ENCODE measurements at regions of chr14 and their contacts with region 1.

Region 1: DNA sequence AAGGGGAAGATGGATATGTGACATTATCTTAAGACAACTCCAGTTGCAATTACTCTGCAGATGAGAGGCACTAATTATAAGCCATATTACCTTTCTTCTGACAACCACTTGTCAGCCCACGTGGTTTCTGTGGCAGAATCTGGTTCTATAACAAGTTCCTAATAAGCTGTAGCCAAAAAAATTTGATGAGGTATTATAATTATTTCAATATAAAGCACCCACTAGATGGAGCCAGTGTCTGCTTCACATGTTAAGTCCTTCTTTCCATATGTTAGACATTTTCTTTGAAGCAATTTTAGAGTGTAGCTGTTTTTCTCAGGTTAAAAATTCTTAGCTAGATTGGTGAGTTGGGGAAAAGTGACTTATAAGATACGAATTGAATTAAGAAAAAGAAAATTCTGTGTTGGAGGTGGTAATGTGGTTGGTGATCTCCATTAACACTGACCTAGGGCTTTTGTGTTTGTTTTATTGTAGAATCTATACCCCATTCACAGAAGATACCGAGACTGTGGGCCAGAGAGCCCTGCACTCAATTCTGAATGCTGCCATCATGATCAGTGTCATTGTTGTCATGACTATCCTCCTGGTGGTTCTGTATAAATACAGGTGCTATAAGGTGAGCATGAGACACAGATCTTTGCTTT is 36.9 kb downstream of the PSEN1 start:
- DNase-seq: peak; percentile 31
- ATAC-seq: peak; percentile 52; the same call in 1 of the 2 replicates
- H3K4me3 ChIP-seq: no peak overlapping the region
- H3K27ac ChIP-seq: no peak overlapping the region
- H3K4me1 ChIP-seq: no peaks in the 10 kb centered on the region
- H3K27me3 ChIP-seq: no peaks in the 10 kb centered on the region
- CTCF ChIP-seq: peak; percentile 36 to 63 (median 57); a peak in 5 of 6 replicates
- POLR2A ChIP-seq: no peak
- RAD21 ChIP-seq: peak; percentile 64

Region 2: DNA sequence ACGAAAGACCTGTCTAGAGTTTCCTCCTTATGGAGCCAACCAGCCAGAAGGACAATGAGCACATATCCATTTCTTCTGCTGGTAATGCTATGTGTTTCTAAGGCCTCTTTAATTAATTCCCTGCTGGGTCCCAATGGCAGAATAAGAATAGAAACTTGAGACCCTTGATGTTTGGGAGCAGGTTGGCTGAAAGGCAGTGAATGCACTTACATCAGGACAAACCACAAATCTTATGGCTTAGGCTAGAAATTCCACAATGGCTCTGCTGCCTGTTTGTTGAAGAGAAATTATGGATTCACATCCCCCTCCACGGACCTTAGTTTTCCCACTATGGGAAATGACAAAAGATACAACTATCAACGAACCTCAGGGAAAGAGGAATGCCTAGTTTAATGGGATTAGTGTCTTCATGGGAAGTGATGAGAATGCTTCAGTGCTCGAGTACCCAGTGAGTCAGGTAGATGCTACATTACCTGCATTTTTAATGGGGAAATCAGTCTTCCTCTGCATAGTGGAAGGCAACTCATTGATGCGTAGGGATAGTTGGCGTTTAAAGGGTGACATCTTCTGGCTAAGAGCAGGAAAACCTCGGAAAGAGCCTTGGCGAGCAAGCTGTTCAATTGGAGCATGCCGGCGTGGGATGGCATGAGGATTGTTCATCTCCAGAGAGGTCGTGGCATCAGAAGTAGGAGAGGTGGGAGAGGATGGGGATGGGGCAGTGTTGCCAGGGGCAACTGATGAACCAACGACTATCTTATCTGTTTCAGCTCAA is 110.6 kb after region 1 on chr14:
- CTCF ChIA-PET with region 1: interaction called, 6 read pairs
- POLR2A ChIA-PET with region 1: no interaction called
- RAD21 ChIA-PET with region 1: no interaction called
- intact Hi-C with region 1: loop called (anchors 2 kb)
- DNase-seq: no peak
- ATAC-seq: peak; percentile 70
- H3K4me3 ChIP-seq: no peak overlapping the region
- H3K27ac ChIP-seq: no peak overlapping the region
- H3K4me1 ChIP-seq: no peaks in the 10 kb centered on the region
- H3K27me3 ChIP-seq: no peaks in the 10 kb centered on the region
- CTCF ChIP-seq: peak in 2 of 3 experiments; percentile 8 to 22; a peak in 1 of 6 replicates
- POLR2A ChIP-seq: no peak
- RAD21 ChIP-seq: peak; percentile 43; the same call in 1 of the 2 replicates

Region 3: GRCh38 chr14:73472185-73473114 is 299.2 kb after region 1 on chr14:
- CTCF ChIA-PET with region 1: interaction called, 37 read pairs
- POLR2A ChIA-PET with region 1: no interaction called
- RAD21 ChIA-PET with region 1: interaction called in 1 of 2 experiments, 3 read pairs
- intact Hi-C with region 1: loop called (anchors 1 kb)
- DNase-seq: peak; percentile 60
- ATAC-seq: peak; percentile 89
- H3K4me3 ChIP-seq: no peak overlapping the region
- H3K27ac ChIP-seq: no peak overlapping the region
- H3K4me1 ChIP-seq: no peaks in the 10 kb centered on the region
- H3K27me3 ChIP-seq: no peaks in the 10 kb centered on the region
- CTCF ChIP-seq: peak; percentile 54 to 78 (median 75)
- POLR2A ChIP-seq: no peak
- RAD21 ChIP-seq: peak; percentile 93

Region 4: GRCh38 chr14:73633116-73634010 is 460.1 kb after region 1 on chr14:
- CTCF ChIA-PET with region 1: no interaction called
- POLR2A ChIA-PET with region 1: no interaction called
- RAD21 ChIA-PET with region 1: no interaction called
- intact Hi-C with region 1: loop called (anchors 5 kb)
- DNase-seq: no peak
- ATAC-seq: peak; percentile 92
- H3K4me3 ChIP-seq: peak overlapping the region in 1 of 2 experiments; percentile 11; a peak in 1 of 4 replicates
- H3K27ac ChIP-seq: no peak overlapping the region
- H3K4me1 ChIP-seq: peaks cover 0 to 8% of the 10 kb centered on the region in 2 experiments; a peak in 1 of 4 replicates
- H3K27me3 ChIP-seq: no peaks in the 10 kb centered on the region
- CTCF ChIP-seq: peak; percentile 79 to 86 (median 81)
- POLR2A ChIP-seq: no peak
- RAD21 ChIP-seq: peak; percentile 80